ENCODE measurements at regions of chr3 and their contacts with region 1.

Region 1: GRCh38 chr3:125011941-125012340 is 43.9 kb downstream of the HEG1 start:
- DNase-seq: no peak
- H3K4me3 ChIP-seq: no peak overlapping the region
- H3K27ac ChIP-seq: no peak overlapping the region
- H3K4me1 ChIP-seq: no peaks in the 10 kb centered on the region
- H3K27me3 ChIP-seq: no peaks in the 10 kb centered on the region
- CTCF ChIP-seq: no peak
- POLR2A ChIP-seq: no peak

Region 2: GRCh38 chr3:123365450-123366143 is 1646.3 kb before region 1 on chr3:
- intact Hi-C with region 1: loop called (anchors 10 kb)
- DNase-seq: no peak
- H3K4me3 ChIP-seq: no peak overlapping the region
- H3K27ac ChIP-seq: no peak overlapping the region
- H3K4me1 ChIP-seq: no peaks in the 10 kb centered on the region
- H3K27me3 ChIP-seq: no peaks in the 10 kb centered on the region
- CTCF ChIP-seq: peak in 1 of 3 donors; percentile 15
- POLR2A ChIP-seq: no peak

Region 3: GRCh38 chr3:125072301-125072700 is 60.4 kb after region 1 on chr3:
- intact Hi-C with region 1: no loop called
- DNase-seq: no peak
- H3K4me3 ChIP-seq: no peak overlapping the region
- H3K27ac ChIP-seq: no peak overlapping the region
- H3K4me1 ChIP-seq: no peaks in the 10 kb centered on the region
- H3K27me3 ChIP-seq: no peaks in the 10 kb centered on the region
- CTCF ChIP-seq: no peak
- POLR2A ChIP-seq: no peak